Activated T-helper 1 cell treated with anti-CD3 and anti-CD28 coated beads, Interleukin-12 subunit alpha, Interleukin-12 subunit beta, Interleukin-2, Interleukin-4 antibody, amounts not matched to agents 30 ng/mL and 10 ng/mL and 1 ng/mL, durations not matched to agents 14 hours and 24 hours and 36 hours (primary cell): ENCODE measurements at regions of chr14 and their contacts with region 1.

Region 1: DNA sequence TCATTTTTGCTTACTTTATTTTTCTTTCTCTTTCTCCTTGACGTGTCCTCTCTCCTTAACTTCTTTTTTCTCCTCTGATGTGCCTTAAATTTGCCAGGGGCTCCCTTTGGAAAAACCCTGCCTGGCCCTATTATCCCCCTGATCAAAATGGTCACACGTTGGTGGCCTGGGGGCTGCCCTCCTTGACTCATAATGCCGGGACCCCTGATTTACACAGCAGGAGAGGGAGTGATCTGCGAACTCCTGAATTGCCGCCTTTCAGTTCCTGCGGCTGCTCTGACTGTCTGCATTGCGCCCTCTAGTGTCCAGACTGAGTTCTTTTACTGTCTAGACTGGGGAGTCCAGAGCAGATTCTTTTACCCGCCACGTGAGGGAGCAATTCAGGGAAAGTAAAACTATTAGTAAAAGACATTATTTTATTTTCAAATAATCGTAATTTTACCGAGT is 44.8 kb upstream of the GZMB start:
- DNase-seq: peak; percentile 77
- H3K4me3 Mint-ChIP-seq: peak overlapping the region; percentile 74
- H3K27ac Mint-ChIP-seq: peak overlapping the region; percentile 94
- H3K4me1 Mint-ChIP-seq: peaks cover 67% of the 10 kb centered on the region
- H3K27me3 Mint-ChIP-seq: no peaks in the 10 kb centered on the region

Region 2: DNA sequence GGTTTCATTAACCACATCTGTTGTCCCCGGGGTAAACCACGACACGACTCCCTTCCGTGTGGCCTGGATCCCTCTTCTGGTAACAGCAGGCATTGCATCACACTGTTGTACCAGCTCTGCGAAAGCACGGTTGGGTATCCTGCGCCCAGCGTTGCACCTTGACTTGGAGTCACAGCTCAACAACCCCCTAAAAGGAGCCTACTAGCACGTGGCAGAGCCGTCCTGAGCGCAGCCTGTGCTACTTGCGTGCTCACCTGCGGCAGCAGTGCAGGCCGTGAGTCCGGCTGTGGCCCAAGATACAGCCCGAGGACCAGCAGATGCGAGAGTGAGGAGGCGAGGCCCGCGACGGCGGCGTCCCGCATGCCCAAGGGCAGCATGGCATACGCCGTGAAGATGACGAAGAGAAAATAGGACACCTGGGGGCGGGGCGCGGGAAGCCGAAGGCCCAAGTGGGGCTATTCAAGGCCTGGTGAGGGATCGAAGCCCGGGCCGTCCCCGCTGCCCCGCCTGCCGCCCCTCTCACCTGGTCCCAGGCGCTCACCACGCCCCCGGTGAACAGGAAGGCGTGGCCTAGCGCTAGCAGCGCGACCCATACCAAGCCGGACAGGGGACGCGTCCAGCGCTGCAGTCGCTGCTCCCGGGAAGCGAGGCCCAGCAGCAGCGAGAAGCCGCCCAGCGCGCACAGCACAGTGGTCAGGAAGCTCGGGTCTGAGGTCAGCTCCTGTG is 346.4 kb before region 1 on chr14:
- intact Hi-C with region 1: loop called (anchors 10 kb)
- DNase-seq: peak; percentile 79
- H3K4me3 Mint-ChIP-seq: peak overlapping the region; percentile 80
- H3K27ac Mint-ChIP-seq: peak overlapping the region; percentile 27
- H3K4me1 Mint-ChIP-seq: peaks cover 58% of the 10 kb centered on the region
- H3K27me3 Mint-ChIP-seq: peaks cover 29% of the 10 kb centered on the region

Region 3: DNA sequence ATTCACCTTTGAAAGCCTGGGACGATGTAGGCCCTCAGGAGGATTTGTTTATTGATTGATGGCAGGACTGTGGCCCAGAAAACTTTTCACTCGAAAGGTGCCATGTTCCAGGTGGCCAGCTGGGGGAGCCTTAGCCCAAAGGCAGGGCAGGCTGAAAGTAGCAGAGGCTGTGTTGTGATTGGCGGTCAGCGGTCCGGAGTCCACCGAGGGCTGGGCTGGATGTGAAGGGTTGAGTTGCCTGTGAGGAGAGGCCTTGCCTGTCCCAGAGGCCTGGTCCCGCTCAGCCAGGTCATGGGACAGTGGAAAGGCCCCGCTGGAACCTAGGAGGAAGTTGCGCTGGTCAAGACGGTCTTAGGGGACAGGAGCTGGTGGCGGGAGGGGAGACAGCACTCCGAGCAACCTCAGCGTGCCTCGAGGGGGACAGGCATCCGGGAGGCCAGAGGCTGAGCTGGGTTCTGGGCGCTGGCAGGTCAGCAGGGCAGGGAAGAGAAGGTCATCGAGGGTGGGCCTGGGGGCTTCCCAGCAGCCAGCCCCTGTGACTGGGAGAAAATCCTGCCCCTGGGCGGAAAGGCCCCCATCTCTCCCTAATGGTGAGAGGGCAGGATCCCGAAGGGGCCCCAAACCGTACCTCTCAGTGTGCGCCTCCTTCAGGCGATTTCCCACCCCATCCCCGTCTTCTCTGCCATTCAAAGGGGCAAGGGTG is 197.1 kb before region 1 on chr14:
- intact Hi-C with region 1: loop called (anchors 1 kb)
- DNase-seq: peak; percentile 34
- H3K4me3 Mint-ChIP-seq: peak overlapping the region; percentile 61
- H3K27ac Mint-ChIP-seq: peak overlapping the region; percentile 57
- H3K4me1 Mint-ChIP-seq: peaks cover 22% of the 10 kb centered on the region
- H3K27me3 Mint-ChIP-seq: no peaks in the 10 kb centered on the region

Region 4: DNA sequence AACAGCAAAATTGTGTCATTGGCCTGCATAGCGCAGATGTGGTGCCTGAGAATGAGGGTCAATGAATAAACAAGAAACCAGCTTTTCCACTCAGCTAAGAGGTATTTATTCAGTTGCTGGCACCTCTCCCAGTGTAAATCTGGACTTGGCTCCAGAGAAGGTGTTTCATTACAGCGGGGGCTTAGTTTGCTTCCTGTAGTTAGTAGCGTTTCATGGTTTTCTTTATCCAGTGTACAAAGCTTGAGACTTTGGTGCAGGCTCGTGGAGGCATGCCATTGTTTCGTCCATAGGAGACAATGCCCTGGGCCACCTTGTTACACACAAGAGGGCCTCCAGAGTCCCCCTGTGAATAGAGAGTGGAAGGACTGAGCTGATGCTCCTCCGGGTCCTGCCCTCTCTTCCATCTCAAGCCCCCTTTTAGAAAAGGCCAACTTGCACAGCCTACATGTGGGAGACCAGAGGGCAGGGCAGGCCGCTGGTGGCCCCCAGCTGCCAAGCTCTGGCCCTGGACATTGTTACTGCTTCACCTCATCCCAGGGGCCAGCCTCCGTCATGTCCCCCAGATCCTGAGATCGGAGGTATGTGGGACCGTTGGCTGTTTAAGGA is 47.8 kb before region 1 on chr14:
- intact Hi-C with region 1: loop called (anchors 1 kb)
- DNase-seq: no peak
- H3K4me3 Mint-ChIP-seq: peak overlapping the region; percentile 94
- H3K27ac Mint-ChIP-seq: peak overlapping the region; percentile 97
- H3K4me1 Mint-ChIP-seq: peaks cover 70% of the 10 kb centered on the region
- H3K27me3 Mint-ChIP-seq: no peaks in the 10 kb centered on the region

Region 5: DNA sequence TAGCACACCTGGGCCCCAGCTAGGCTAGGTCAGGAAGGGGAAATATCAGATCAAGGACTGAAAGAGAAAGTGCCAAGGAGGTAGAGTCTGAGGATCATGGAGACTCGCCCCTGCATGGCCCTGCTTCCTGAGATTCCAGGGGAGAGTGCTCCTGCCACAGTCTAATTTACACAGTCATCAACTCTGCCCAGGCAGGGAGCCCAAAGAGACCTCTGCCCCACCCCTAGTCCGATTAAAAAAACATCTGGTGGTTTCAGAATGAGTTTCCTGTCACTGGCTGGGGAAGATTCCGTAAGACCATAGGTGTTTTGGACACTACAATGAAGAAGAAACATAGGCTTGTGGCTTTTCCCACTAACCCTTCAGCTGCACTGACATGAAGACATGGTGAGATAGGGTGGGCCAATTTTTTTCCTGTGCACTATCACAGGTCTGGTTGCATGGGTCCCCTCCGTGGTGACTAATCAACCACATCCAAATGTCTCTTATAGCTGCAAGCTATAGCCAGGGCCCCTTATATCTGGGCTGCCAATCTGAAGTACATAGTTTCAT is 13.3 kb before region 1 on chr14:
- intact Hi-C with region 1: loop called (anchors 2 kb)
- DNase-seq: peak; percentile 38
- H3K4me3 Mint-ChIP-seq: peak overlapping the region; percentile 62
- H3K27ac Mint-ChIP-seq: peak overlapping the region; percentile 85
- H3K4me1 Mint-ChIP-seq: peaks cover 92% of the 10 kb centered on the region
- H3K27me3 Mint-ChIP-seq: no peaks in the 10 kb centered on the region